Ovary (tissue), 10 donors: ENCODE measurements at regions of chr3 and their contacts with region 1.

Region 1: DNA sequence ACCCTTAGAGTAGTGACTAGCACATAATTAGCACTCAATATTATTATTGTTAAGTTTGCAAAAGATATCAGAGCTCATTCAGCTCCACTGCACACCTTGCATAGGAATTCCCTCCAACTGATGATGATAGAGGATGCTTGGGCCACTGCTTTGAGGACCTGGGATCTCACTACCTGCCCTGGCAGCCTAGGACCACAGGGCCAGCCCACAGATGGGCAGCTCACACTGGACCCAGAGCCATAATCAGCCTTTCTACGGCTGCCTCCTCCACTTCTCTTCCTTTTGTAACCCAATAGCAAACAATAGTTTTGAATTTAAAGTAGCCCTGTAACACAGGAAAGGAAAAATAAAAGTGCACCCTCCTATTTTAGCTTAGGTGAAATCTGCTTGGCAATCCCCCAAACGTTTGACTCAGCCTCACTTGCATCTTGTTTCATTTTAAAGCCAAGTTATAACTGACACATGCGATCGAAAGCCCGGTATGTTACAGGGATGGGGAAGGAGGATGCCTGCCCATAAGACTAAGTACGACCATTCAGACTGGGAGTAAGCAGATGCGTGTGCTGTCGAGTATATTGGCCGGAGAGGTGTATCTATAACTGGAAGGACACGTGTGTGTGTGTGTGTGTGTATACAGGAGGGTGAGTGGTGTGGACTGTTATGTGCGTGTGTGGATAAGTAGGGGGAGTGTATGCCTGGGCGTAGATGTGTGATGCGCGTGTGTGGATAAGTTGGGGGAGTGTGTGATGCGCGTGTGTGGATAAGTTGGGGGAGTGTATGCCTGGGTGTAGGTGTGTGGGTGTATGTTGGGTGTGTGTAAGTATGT is 65.9 kb downstream of the CPN2 start:
- DNase-seq: peak in 3 of 5 donors; percentile 10 to 27 (median 21)
- H3K4me3 ChIP-seq: no peak overlapping the region
- H3K27ac ChIP-seq: no peak overlapping the region
- H3K4me1 ChIP-seq: peaks cover 10% of the 10 kb centered on the region
- H3K27me3 ChIP-seq: no peaks in the 10 kb centered on the region
- CTCF ChIP-seq: no peak
- EP300 ChIP-seq: no peak
- POLR2A ChIP-seq: no peak

Region 2: DNA sequence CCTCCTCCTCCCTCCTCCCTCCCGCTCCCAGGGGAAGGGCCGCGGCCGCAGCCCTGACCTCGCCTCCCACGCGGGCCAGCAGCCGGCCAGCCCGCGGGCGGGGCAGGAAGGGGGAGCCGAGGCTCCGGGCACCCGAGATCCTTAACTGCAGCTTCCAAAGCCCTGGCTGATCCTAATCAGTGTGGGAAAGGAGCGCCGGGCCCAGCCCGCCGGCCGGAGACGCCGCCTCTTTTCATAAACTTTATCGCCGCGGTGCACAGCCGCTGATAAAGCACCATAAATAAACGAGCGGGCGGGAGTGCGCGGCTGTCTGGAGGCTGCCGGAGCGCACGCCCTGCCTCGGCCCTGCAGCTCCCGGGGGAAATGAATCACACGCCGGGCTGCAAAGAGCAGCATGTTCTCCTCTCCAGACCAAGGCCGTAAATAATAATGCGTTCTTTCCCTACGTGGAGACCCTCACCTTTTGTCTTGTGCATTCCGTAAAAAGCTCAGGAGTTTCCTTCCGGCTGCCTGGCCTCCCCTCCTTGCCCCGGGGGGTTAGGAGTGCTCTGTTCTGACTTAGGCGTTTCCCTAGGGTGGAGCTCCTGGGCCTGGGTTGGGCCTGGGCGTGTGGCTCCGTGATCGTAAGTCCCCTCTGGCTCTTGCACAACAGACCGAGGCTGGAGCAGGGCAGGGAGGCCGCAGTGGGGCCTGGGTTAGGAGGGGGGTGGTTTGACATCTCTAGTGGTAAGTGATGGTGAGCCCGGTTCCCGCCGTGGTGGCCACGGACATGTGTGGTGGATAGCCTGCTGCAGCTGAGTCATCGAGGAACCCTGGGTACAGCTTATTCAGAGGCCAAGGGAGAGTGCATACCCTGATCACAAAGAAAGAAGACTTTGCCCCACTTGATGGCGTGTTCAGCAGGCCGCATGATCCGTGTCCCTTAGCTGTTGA is 281.8 kb before region 1 on chr3:
- intact Hi-C with region 1: loop called in 1 of 4 experiments (anchors 10 kb)
- DNase-seq: peak; percentile 90 to 94 (median 92)
- H3K4me3 ChIP-seq: peak overlapping the region; percentile 44
- H3K27ac ChIP-seq: peak overlapping the region; percentile 23 to 69
- H3K4me1 ChIP-seq: peaks cover 11% of the 10 kb centered on the region
- H3K27me3 ChIP-seq: no peaks in the 10 kb centered on the region
- CTCF ChIP-seq: peak in 1 of 3 donors; percentile 0
- EP300 ChIP-seq: no peak
- POLR2A ChIP-seq: peak; percentile 16